MCF 10A (cell line): ENCODE measurements at regions of chr19 and their contacts with region 1.

Region 1: DNA sequence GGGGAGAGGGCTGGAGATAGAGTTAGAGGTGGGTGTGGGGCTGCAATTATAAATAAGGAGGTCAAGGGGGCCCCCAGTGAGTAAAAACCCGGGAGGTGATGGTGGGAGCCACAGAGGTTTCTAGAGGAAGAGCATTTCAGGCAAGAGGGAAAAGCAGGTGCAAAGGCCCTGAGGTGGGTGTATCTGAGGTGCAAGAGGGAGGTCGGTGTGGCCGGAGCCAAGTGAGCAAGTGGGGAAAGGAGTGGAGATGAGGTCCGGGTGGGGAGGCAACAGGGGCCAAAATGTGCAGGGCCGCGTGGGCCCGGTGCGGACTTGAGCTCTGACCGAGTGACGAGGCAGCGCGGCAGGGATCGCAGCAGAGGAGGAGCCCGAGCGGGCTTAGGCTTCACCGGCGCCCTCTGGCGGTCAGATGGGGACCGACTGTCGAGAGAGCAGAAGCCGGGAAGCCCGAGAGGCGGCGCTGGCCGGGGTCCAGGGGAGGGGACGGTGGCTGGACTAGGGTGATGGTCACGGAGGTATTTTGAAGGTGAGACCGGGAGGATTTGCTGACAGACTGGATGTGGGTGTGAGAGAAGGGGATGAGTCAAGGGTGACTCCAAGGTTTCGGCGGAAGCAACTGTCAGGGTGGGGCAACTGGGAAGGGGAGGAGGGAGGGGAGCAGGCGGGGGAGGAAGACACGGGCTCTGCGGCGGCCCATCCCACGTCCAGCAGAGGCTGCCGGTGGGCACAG is 17.7 kb upstream of the SPACA4 start:
- DNase-seq: peak; percentile 96
- H3K4me3 Mint-ChIP-seq: peak overlapping the region; percentile 59
- H3K27ac Mint-ChIP-seq: peak overlapping the region; percentile 83
- H3K4me1 Mint-ChIP-seq: peaks cover 13% of the 10 kb centered on the region
- H3K27me3 Mint-ChIP-seq: no peaks in the 10 kb centered on the region
- CTCF ChIP-seq: peak; percentile 94

Region 2: GRCh38 chr19:48308631-48309586 is 279.9 kb before region 1 on chr19:
- CTCF ChIA-PET with region 1: interaction called, 5 read pairs
- POLR2A ChIA-PET with region 1: no interaction called
- intact Hi-C with region 1: loop called (anchors 1 kb)
- DNase-seq: no peak
- H3K4me3 Mint-ChIP-seq: no peak overlapping the region
- H3K27ac Mint-ChIP-seq: no peak overlapping the region
- H3K4me1 Mint-ChIP-seq: no peaks in the 10 kb centered on the region
- H3K27me3 Mint-ChIP-seq: peaks cover 25% of the 10 kb centered on the region
- CTCF ChIP-seq: no peak

Region 3: GRCh38 chr19:48391107-48391986 is 197.5 kb before region 1 on chr19 and contains the start of gene KDELR1:
- CTCF ChIA-PET with region 1: interaction called, 9 read pairs
- POLR2A ChIA-PET with region 1: no interaction called
- intact Hi-C with region 1: loop called (anchors 1 kb)
- DNase-seq: peak; percentile 76
- H3K4me3 Mint-ChIP-seq: peak within 1 kb of the TSS; percentile 82
- H3K27ac Mint-ChIP-seq: peak within 1 kb of the TSS; percentile 90
- H3K4me1 Mint-ChIP-seq: peaks cover 25% of the 10 kb centered on the region
- H3K27me3 Mint-ChIP-seq: peaks cover 22% of the 10 kb centered on the region
- CTCF ChIP-seq: peak; percentile 89
- total RNA-seq, gene KDELR1: 113 and 134 TPM in 2 replicates

Region 4: DNA sequence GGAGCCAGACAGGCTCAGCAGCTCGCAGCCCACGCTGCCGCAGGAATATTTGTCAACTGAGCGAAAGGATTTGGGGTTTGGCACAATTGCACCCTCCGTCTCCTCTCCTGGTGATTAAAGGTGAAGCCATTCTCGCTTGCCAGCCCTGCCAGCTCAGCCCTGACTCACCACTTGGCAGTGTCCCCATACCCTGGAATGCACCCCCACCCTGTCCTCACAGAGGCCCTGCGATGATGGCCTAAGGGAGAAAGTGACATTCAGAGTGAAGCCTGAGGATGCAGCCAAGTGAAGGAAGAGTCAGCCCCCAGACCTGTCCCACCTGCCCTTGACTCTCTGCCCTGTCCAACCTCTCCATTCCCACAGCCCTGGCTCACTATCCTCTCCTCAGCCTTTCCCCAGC is 100.8 kb before region 1 on chr19:
- CTCF ChIA-PET with region 1: interaction called, 41 read pairs
- POLR2A ChIA-PET with region 1: interaction called, 17 read pairs
- intact Hi-C with region 1: loop called (anchors 1 kb)
- DNase-seq: peak; percentile 97
- H3K4me3 Mint-ChIP-seq: peak overlapping the region; percentile 49
- H3K27ac Mint-ChIP-seq: peak overlapping the region; percentile 83
- H3K4me1 Mint-ChIP-seq: peaks cover 48% of the 10 kb centered on the region
- H3K27me3 Mint-ChIP-seq: no peaks in the 10 kb centered on the region
- CTCF ChIP-seq: no peak

Region 5: GRCh38 chr19:48501496-48502350 is 87.1 kb before region 1 on chr19:
- CTCF ChIA-PET with region 1: interaction called, 99 read pairs
- POLR2A ChIA-PET with region 1: no interaction called
- intact Hi-C with region 1: loop called (anchors 1 kb)
- DNase-seq: peak; percentile 97
- H3K4me3 Mint-ChIP-seq: peak overlapping the region; percentile 74
- H3K27ac Mint-ChIP-seq: peak overlapping the region; percentile 70
- H3K4me1 Mint-ChIP-seq: peaks cover 15% of the 10 kb centered on the region
- H3K27me3 Mint-ChIP-seq: peaks cover 16% of the 10 kb centered on the region
- CTCF ChIP-seq: no peak